ENCODE measurements at regions of chr17 and their contacts with region 1.

Region 1: GRCh38 chr17:6393351-6393952 is 41.5 kb downstream of the AIPL1 start:
- DNase-seq: peak in 4 of 10 donors; percentile 22 to 58 (median 42)
- H3K4me3 ChIP-seq: no peak overlapping the region
- H3K27ac ChIP-seq: peak overlapping the region in 2 of 59 donors; percentile 16 to 43
- H3K27me3 ChIP-seq: peaks cover 0 to 36% (median 13%) of the 10 kb centered on the region in 45 donors
- CTCF ChIP-seq: no peak

Region 2: GRCh38 chr17:6163612-6164333 is 229.7 kb before region 1 on chr17:
- intact Hi-C with region 1: loop called in 1 of 2 experiments (anchors 10 kb)
- DNase-seq: peak in 4 of 10 donors; percentile 25 to 47 (median 40)
- H3K4me3 ChIP-seq: no peak overlapping the region
- H3K27ac ChIP-seq: no peak overlapping the region
- H3K27me3 ChIP-seq: peaks cover 0 to 4% (median 0%) of the 10 kb centered on the region in 45 donors
- CTCF ChIP-seq: no peak

Region 3: DNA sequence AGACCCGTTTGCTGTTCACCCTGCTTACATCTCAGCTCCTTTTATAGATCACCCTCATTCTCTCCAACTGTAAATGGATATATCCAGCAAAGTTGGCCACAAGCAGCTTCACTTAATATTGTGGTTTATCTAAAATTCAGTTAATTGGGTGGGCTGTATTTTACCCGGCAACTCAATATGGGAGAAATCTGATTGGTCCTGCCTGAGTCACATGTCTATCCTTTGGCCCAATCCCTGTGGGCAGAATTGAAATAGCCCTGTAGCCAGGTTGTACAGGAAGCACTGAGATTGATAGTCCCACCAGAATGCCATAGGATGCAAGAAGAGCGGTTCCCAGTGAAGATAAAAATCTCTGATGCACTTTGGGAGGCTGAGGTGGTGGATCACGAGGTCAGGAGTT is 31.7 kb before region 1 on chr17:
- intact Hi-C with region 1: no loop called
- DNase-seq: no peak
- H3K4me3 ChIP-seq: no peak overlapping the region
- H3K27ac ChIP-seq: no peak overlapping the region
- H3K27me3 ChIP-seq: peaks cover 0 to 8% (median 0%) of the 10 kb centered on the region in 45 donors
- CTCF ChIP-seq: no peak